ENCODE measurements at regions of chr1 and their contacts with region 1.

Region 1: GRCh38 chr1:167803358-167804207 is 81.8 kb downstream of the MPZL1 start:
- DNase-seq: peak; percentile 79
- H3K4me3 Mint-ChIP-seq: peak overlapping the region; percentile 46
- H3K27ac Mint-ChIP-seq: peak overlapping the region; percentile 85
- H3K4me1 Mint-ChIP-seq: peaks cover 28% of the 10 kb centered on the region
- H3K27me3 Mint-ChIP-seq: no peaks in the 10 kb centered on the region

Region 2: DNA sequence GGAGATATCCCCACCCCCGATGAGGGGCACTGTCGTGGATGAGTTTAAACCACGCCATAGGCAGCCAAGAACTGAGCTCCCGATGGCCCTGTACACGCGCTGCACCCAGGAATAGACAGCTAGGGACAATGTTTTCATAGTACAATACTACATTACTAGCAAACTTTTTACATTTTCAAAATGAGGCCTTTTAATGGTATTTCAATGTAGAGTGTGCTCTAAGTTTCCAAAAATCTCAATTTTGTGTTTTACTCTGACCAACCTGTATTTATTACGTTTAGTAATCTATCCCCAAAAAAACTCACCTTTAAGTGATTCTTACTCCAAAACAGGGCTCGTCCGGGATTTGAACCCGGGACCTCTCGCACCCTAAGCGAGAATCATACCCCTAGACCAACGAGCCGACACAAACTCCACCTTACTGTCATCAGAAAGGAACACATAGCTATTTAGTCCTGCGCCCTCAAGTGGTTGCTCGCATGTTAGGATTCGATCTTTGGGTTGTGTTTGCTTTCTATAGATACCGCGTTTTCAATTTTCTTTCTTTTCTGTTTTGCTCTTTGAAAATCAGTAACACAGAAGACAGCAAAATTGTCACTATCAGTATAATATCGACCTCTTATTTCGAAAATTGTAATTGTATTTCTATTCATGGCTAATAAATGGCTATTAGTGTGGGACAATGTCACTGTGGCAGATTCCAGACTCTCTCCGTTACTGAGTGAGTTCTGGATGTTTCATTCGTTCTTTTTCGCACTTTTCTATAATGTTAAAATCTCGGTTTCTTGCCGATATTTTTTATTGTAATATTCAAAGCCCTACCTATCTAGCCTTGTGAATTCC is 88.2 kb before region 1 on chr1:
- intact Hi-C with region 1: loop called (anchors 2 kb)
- DNase-seq: peak; percentile 83
- H3K4me3 Mint-ChIP-seq: peak overlapping the region; percentile 87
- H3K27ac Mint-ChIP-seq: peak overlapping the region; percentile 87
- H3K4me1 Mint-ChIP-seq: peaks cover 29% of the 10 kb centered on the region
- H3K27me3 Mint-ChIP-seq: peaks cover 4% of the 10 kb centered on the region

Region 3: GRCh38 chr1:167756730-167757405 is 46.7 kb before region 1 on chr1:
- intact Hi-C with region 1: no loop called
- DNase-seq: no peak
- H3K4me3 Mint-ChIP-seq: no peak overlapping the region
- H3K27ac Mint-ChIP-seq: no peak overlapping the region
- H3K4me1 Mint-ChIP-seq: peaks cover 30% of the 10 kb centered on the region
- H3K27me3 Mint-ChIP-seq: no peaks in the 10 kb centered on the region

Measured in activated T-helper 2 cell treated with anti-CD3 and anti-CD28 coated beads, Interferon-gamma antibody, Interleukin-2, Interleukin-4, amounts not matched to agents 10 μg/mL and 5 μg/mL and 100 μg/mL, durations not matched to agents 14 hours and 24 hours and 36 hours (primary cell).